WTC11 (cell line): ENCODE measurements at regions of chr5 and their contacts with region 1.

Region 1: DNA sequence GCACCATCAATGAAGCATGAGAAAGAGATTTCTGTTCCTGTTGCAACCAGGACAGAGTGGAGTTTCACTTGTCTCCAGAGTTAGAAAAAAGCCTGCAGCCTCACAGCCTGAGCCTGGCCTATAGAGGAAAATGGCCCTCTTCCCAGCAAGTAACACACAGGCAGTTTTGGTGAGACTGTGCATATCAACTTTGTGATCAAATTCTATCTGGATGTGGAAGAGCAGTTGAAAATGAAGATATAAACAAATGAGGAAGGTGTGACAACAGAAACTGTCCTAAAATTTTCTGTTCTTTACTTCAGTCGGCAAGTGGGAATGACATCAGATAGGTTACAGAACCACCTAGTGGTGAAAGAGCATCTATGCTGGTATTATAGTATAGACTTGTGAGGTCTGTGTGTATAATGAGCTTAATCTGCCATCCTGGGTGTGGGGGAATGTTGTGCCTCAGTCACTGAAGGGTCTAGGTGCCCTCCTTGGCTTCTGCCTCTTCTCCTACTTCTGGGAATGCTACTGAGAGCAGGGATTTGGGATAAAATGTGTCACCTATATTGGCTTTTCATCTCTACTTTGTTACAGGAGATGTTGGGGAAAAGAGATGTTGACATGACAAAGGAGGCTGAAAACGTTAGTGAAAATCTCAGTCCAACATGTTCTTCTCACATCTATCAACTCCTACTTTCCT is 28.2 kb downstream of the YIPF5 start:
- DNase-seq: no peak
- ATAC-seq: peak; percentile 96
- H3K4me3 Mint-ChIP-seq: no peak overlapping the region
- H3K27ac Mint-ChIP-seq: peak overlapping the region; percentile 29; the same call in 1 of the 2 replicates
- H3K4me1 Mint-ChIP-seq: peaks cover 15% of the 10 kb centered on the region
- H3K27me3 Mint-ChIP-seq: no peaks in the 10 kb centered on the region; the same call in 1 of the 2 replicates
- CTCF ChIP-seq: peak; percentile 49

Region 2: GRCh38 chr5:142304013-142304701 is 1838.1 kb before region 1 on chr5:
- CTCF ChIA-PET with region 1: no interaction called
- POLR2A ChIA-PET with region 1: no interaction called
- DNase-seq: no peak
- ATAC-seq: no peak
- H3K4me3 Mint-ChIP-seq: no peak overlapping the region
- H3K27ac Mint-ChIP-seq: no peak overlapping the region
- H3K4me1 Mint-ChIP-seq: peaks cover 50% of the 10 kb centered on the region
- H3K27me3 Mint-ChIP-seq: no peaks in the 10 kb centered on the region
- CTCF ChIP-seq: no peak

Region 3: DNA sequence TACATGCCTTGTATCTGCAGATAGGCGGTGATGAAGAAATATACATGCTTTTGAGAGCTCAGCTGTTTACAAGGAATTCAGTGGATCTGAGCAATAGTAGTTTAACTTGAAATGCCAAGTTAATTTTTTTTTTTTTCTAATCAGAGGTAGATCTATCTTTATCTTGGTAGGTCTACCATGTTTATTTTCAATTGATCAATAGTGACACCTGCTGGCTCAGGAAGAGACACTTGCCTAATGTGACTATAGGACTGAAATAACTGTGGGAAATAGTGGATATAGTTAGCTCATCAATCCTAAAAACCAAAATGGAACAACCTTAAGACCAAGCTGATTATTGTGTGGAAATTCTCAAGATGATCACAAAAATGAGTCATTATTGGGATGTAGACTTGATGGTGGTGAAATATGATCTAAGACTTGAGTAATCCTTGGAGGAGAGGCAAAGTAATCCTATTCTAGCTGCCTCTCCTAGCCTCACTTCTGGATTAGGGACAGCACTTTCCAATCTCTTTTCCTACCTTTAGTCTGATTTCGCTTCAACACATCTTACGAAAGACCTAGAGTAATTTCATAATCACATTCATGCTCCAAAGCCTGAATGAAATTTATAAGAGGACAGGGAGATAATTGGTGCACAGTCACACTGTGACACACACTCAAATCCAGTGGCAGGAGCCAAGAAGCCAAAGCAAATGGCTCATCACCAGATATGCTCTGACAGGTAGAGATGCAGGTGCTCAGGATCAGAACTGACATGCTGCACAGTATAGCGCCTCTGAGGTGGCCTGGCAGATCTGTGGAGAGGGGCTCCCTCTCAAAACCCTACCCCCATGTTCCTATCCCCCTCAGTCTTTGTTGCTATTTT is 174.0 kb before region 1 on chr5:
- CTCF ChIA-PET with region 1: interaction called, 13 read pairs
- POLR2A ChIA-PET with region 1: interaction called, 4 read pairs
- DNase-seq: no peak
- ATAC-seq: peak; percentile 84
- H3K4me3 Mint-ChIP-seq: no peak overlapping the region
- H3K27ac Mint-ChIP-seq: no peak overlapping the region
- H3K4me1 Mint-ChIP-seq: peaks cover 7% of the 10 kb centered on the region
- H3K27me3 Mint-ChIP-seq: no peaks in the 10 kb centered on the region; the same call in 1 of the 2 replicates
- CTCF ChIP-seq: no peak; the same call in 1 of the 2 replicates

Region 4: DNA sequence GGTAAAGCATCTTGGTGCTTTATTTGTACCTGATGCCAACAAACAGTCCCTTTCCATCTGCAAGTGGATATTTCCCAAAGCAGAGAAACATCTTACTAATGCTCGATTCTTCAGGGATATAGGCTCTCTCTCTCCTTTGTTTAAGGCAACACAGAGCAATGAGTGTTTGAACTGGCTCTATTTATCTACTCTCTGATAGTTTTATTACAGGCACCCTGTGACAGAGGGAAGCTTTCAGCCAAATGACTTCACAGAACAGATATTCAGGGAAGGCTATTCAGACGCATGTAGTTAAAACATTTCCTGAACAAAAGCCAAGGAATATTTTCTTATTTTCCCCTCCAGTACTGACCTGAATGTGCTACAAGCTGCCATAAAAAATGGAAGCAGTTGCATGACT is 113.6 kb before region 1 on chr5:
- CTCF ChIA-PET with region 1: no interaction called
- POLR2A ChIA-PET with region 1: no interaction called
- DNase-seq: no peak
- ATAC-seq: no peak
- H3K4me3 Mint-ChIP-seq: no peak overlapping the region
- H3K27ac Mint-ChIP-seq: no peak overlapping the region
- H3K4me1 Mint-ChIP-seq: no peaks in the 10 kb centered on the region
- H3K27me3 Mint-ChIP-seq: no peaks in the 10 kb centered on the region
- CTCF ChIP-seq: no peak

Region 5: GRCh38 chr5:144125163-144125726 is 17.0 kb before region 1 on chr5:
- CTCF ChIA-PET with region 1: interaction called, 15 read pairs
- POLR2A ChIA-PET with region 1: no interaction called
- DNase-seq: no peak
- ATAC-seq: peak; percentile 69
- H3K4me3 Mint-ChIP-seq: no peak overlapping the region
- H3K27ac Mint-ChIP-seq: no peak overlapping the region
- H3K4me1 Mint-ChIP-seq: peaks cover 16% of the 10 kb centered on the region
- H3K27me3 Mint-ChIP-seq: no peaks in the 10 kb centered on the region
- CTCF ChIP-seq: no peak

Region 6: GRCh38 chr5:144170276-144171024 is 28.2 kb after region 1 on chr5 and contains the starts of genes KCTD16 and YIPF5:
- CTCF ChIA-PET with region 1: interaction called, 11 read pairs
- POLR2A ChIA-PET with region 1: no interaction called
- DNase-seq: peak; percentile 95
- ATAC-seq: peak; percentile 100
- H3K4me3 Mint-ChIP-seq: peak within 1 kb of the TSS; percentile 85
- H3K27ac Mint-ChIP-seq: peak within 1 kb of the TSS; percentile 48
- H3K4me1 Mint-ChIP-seq: peaks cover 14% of the 10 kb centered on the region
- H3K27me3 Mint-ChIP-seq: no peaks in the 10 kb centered on the region
- CTCF ChIP-seq: no peak
- total RNA-seq, gene KCTD16: 0.20 to 0.73 TPM (median 0.34 TPM) in 3 replicates
- total RNA-seq, gene YIPF5: 33.8 to 39.2 TPM (median 37.7 TPM) in 3 replicates

Region 7: GRCh38 chr5:144352330-144352729 is 210.0 kb after region 1 on chr5:
- CTCF ChIA-PET with region 1: no interaction called
- POLR2A ChIA-PET with region 1: no interaction called
- DNase-seq: no peak
- ATAC-seq: no peak
- H3K4me3 Mint-ChIP-seq: no peak overlapping the region
- H3K27ac Mint-ChIP-seq: no peak overlapping the region
- H3K4me1 Mint-ChIP-seq: peaks cover 24% of the 10 kb centered on the region
- H3K27me3 Mint-ChIP-seq: peaks cover 98% of the 10 kb centered on the region
- CTCF ChIP-seq: no peak